ENCODE measurements at regions of chr17 and their contacts with region 1.

Region 1: DNA sequence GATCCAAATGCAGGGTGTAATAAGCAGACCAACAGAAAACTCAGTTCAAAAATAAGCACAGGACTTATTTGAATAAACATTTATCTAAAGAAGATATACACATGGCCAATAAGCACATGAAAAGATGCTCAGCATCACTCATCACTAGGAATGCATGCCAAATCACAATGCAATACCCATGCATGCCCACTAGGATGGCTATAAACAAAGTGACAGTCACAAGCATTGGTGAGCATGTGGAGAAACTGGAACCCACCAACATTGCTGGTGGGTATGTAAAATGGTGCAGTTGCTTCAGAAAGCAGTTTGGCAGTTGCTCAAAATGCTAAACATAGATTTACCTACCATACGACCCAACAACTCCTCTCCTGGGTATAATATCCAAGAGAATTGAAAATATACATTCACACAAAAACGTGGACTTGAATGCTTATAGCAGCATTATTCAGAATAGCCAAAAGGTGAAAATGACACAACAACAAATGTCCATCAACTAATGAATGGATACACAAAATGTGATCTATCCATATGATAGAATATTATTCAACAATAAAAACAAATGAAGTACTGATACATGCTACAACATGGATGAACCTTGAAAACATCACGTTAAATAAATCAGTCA is 20.1 kb downstream of the UBE2O start:
- DNase-seq: peak in 1 of 35 experiments; percentile 25
- ATAC-seq: peak in 2 of 4 experiments; percentile 40 to 50
- H3K4me3 ChIP-seq: no peak overlapping the region
- H3K4me3 Mint-ChIP-seq: no peak overlapping the region
- H3K27ac ChIP-seq: no peak overlapping the region
- H3K27ac Mint-ChIP-seq: no peak overlapping the region
- H3K4me1 ChIP-seq: no peaks in the 10 kb centered on the region
- H3K4me1 Mint-ChIP-seq: peaks cover 25 to 52% (median 26%) of the 10 kb centered on the region in 3 donors
- H3K27me3 ChIP-seq: no peaks in the 10 kb centered on the region
- H3K27me3 Mint-ChIP-seq: no peaks in the 10 kb centered on the region

Region 2: DNA sequence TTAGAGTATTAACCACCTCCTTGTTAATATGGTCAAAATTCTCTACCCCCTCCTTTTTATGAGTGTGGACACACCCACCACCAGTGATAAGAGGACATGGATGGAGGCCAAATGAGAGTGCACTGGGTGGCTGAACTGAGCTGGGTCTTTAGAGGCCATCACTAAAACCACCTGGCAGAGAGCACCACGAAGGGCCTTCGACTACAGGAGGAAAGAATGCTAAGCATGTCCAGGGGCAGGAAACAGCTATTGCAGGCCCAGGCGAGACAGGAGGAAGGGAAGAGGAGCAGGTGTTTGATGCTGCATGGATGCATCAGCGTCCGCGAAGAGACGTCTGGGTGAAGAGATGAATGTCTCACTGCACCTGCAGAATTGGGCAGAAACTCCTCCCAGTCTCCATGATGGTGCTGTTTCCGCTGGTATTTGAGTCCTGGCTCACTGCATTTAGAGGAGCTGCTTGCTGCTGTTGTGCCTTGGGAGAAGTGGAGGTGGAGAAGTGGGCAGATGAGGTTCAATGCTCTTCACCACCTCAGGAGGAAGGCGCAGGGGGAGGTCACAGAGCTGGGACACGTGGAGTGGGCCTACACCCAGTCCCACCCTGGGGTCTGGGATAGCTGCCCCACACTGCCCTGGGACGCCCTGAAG is 15.2 kb before region 1 on chr17:
- CTCF ChIA-PET with region 1: no interaction called
- POLR2A ChIA-PET with region 1: no interaction called
- DNase-seq: no peak
- ATAC-seq: no peak
- H3K4me3 ChIP-seq: no peak overlapping the region
- H3K4me3 Mint-ChIP-seq: no peak overlapping the region
- H3K27ac ChIP-seq: no peak overlapping the region
- H3K27ac Mint-ChIP-seq: peak overlapping the region in 1 of 2 donors; percentile 69
- H3K4me1 ChIP-seq: peaks cover 0 to 3% of the 10 kb centered on the region in 2 experiments
- H3K4me1 Mint-ChIP-seq: peaks cover 19 to 28% (median 23%) of the 10 kb centered on the region in 3 donors
- H3K27me3 ChIP-seq: no peaks in the 10 kb centered on the region
- H3K27me3 Mint-ChIP-seq: no peaks in the 10 kb centered on the region

Region 3: GRCh38 chr17:76879254-76879653 is 446.4 kb after region 1 on chr17:
- CTCF ChIA-PET with region 1: interaction called in 1 of 2 experiments, 13 read pairs
- POLR2A ChIA-PET with region 1: no interaction called
- DNase-seq: no peak
- ATAC-seq: no peak
- H3K4me3 ChIP-seq: no peak overlapping the region
- H3K4me3 Mint-ChIP-seq: no peak overlapping the region
- H3K27ac ChIP-seq: no peak overlapping the region
- H3K27ac Mint-ChIP-seq: no peak overlapping the region
- H3K4me1 ChIP-seq: no peaks in the 10 kb centered on the region
- H3K4me1 Mint-ChIP-seq: no peaks in the 10 kb centered on the region
- H3K27me3 ChIP-seq: peaks cover 0 to 30% of the 10 kb centered on the region in 2 experiments
- H3K27me3 Mint-ChIP-seq: peaks cover 0 to 2% of the 10 kb centered on the region in 2 donors